Activated CD4-positive, alpha-beta memory T cell treated with anti-CD3 and anti-CD28 coated beads for 36 hours (primary cell): ENCODE measurements at regions of chr13 and their contacts with region 1.

Region 1: GRCh38 chr13:28636674-28637317 is 22.1 kb upstream of the POMP start:
- DNase-seq: peak; percentile 72
- H3K4me3 Mint-ChIP-seq: no peak overlapping the region
- H3K27ac Mint-ChIP-seq: no peak overlapping the region
- H3K4me1 Mint-ChIP-seq: peaks cover 6% of the 10 kb centered on the region
- H3K27me3 Mint-ChIP-seq: peaks cover 27% of the 10 kb centered on the region

Region 2: GRCh38 chr13:28058866-28059624 is 577.8 kb before region 1 on chr13:
- CTCF ChIA-PET with region 1: no interaction called
- POLR2A ChIA-PET with region 1: no interaction called
- intact Hi-C with region 1: loop called (anchors 10 kb)
- DNase-seq: peak; percentile 60
- H3K4me3 Mint-ChIP-seq: no peak overlapping the region
- H3K27ac Mint-ChIP-seq: no peak overlapping the region
- H3K4me1 Mint-ChIP-seq: no peaks in the 10 kb centered on the region
- H3K27me3 Mint-ChIP-seq: peaks cover 14% of the 10 kb centered on the region

Region 3: GRCh38 chr13:28324181-28324789 is 312.5 kb before region 1 on chr13:
- CTCF ChIA-PET with region 1: interaction called, 6 read pairs
- POLR2A ChIA-PET with region 1: no interaction called
- intact Hi-C with region 1: loop called (anchors 1 kb)
- DNase-seq: peak; percentile 65
- H3K4me3 Mint-ChIP-seq: no peak overlapping the region
- H3K27ac Mint-ChIP-seq: no peak overlapping the region
- H3K4me1 Mint-ChIP-seq: peaks cover 3% of the 10 kb centered on the region
- H3K27me3 Mint-ChIP-seq: peaks cover 3% of the 10 kb centered on the region

Region 4: GRCh38 chr13:28494776-28495537 is 141.8 kb before region 1 on chr13 and contains the start of gene FLT1:
- CTCF ChIA-PET with region 1: interaction called, 5 read pairs
- POLR2A ChIA-PET with region 1: no interaction called
- intact Hi-C with region 1: loop called (anchors 2 kb)
- DNase-seq: peak; percentile 39
- H3K4me3 Mint-ChIP-seq: peak within 1 kb of the TSS; percentile 70
- H3K27ac Mint-ChIP-seq: no peak within 1 kb of the TSS
- H3K4me1 Mint-ChIP-seq: peaks cover 10% of the 10 kb centered on the region
- H3K27me3 Mint-ChIP-seq: peaks cover 47% of the 10 kb centered on the region
- total RNA-seq, gene FLT1: 17.2 to 19.5 TPM

Region 5: GRCh38 chr13:28527411-28528028 is 109.3 kb before region 1 on chr13:
- CTCF ChIA-PET with region 1: interaction called, 3 read pairs
- POLR2A ChIA-PET with region 1: no interaction called
- intact Hi-C with region 1: loop called (anchors 1 kb)
- DNase-seq: no peak
- H3K4me3 Mint-ChIP-seq: no peak overlapping the region
- H3K27ac Mint-ChIP-seq: no peak overlapping the region
- H3K4me1 Mint-ChIP-seq: peaks cover 12% of the 10 kb centered on the region
- H3K27me3 Mint-ChIP-seq: peaks cover 29% of the 10 kb centered on the region